Activated T-helper 2 cell treated with anti-CD3 and anti-CD28 coated beads, Interferon-gamma antibody, Interleukin-2, Interleukin-4, amounts not matched to agents 10 μg/mL and 5 μg/mL and 100 μg/mL, durations not matched to agents 14 hours and 24 hours and 36 hours (primary cell): ENCODE measurements at regions of chr2 and their contacts with region 1.

Region 1: GRCh38 chr2:136117909-136118818 is at the start of gene CXCR4:
- DNase-seq: peak; percentile 81
- H3K4me3 Mint-ChIP-seq: peak within 1 kb of the TSS; percentile 97
- H3K27ac Mint-ChIP-seq: peak within 1 kb of the TSS; percentile 96
- H3K4me1 Mint-ChIP-seq: peaks cover 49% of the 10 kb centered on the region
- H3K27me3 Mint-ChIP-seq: peaks cover 21% of the 10 kb centered on the region
- total RNA-seq, gene CXCR4: 140 and 144 TPM in 2 replicates

Region 2: DNA sequence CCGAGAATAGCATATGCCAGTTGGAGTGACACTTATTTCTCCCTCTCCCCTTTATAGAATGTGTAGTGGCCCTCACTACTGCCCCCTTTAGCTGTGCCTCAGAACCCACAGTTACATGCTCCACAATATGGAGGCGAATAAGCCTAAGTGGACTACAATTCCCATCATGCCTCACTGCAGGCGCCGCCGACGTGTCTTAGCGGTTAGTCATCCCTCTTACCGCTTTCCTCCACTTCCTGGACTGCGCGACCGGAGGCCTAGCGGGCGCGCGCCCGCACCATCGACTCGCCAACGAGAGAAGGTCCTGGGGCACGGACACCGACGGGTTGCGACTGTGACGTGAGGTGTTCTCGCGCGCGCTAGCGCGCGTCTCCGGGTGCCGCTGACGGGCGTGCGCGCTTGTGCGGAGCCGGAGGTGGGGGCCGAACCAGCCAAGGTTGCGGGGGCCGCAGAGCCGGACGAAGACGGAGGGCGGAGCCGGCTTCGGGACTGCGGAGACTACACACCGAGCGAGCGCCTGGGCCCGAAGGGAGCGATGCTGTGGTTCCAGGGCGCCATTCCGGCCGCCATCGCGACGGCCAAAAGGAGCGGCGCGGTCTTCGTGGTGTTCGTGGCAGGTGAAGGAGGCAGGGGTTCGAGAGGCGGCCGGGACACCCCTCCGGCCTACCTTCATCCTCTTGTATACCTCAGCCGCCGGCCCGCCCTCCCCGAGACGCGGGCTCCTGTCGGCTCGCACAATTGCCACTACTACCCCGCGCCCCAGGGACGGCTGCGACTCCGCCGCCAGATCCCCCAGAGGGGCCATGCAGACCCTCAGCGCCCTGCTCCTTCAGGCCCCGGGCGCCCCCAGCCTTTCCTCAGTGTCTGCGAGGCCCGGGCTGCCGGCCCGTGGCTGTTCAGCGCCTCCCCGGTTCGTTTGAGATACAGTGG is 376.5 kb before region 1 on chr2 and contains the start of gene UBXN4:
- intact Hi-C with region 1: loop called (anchors 5 kb)
- DNase-seq: peak; percentile 90
- H3K4me3 Mint-ChIP-seq: peak within 1 kb of the TSS; percentile 98
- H3K27ac Mint-ChIP-seq: peak within 1 kb of the TSS; percentile 100
- H3K4me1 Mint-ChIP-seq: peaks cover 34% of the 10 kb centered on the region
- H3K27me3 Mint-ChIP-seq: no peaks in the 10 kb centered on the region
- total RNA-seq, gene UBXN4: 118 and 138 TPM in 2 replicates

Region 3: GRCh38 chr2:135797497-135798274 is 320.5 kb before region 1 on chr2:
- intact Hi-C with region 1: no loop called
- DNase-seq: peak; percentile 67
- H3K4me3 Mint-ChIP-seq: no peak overlapping the region
- H3K27ac Mint-ChIP-seq: no peak overlapping the region
- H3K4me1 Mint-ChIP-seq: peaks cover 21% of the 10 kb centered on the region
- H3K27me3 Mint-ChIP-seq: no peaks in the 10 kb centered on the region

Region 4: GRCh38 chr2:135960656-135961551 is 157.3 kb before region 1 on chr2:
- intact Hi-C with region 1: loop called (anchors 2 kb)
- DNase-seq: peak; percentile 32
- H3K4me3 Mint-ChIP-seq: peak overlapping the region; percentile 66
- H3K27ac Mint-ChIP-seq: peak overlapping the region; percentile 96
- H3K4me1 Mint-ChIP-seq: peaks cover 57% of the 10 kb centered on the region
- H3K27me3 Mint-ChIP-seq: no peaks in the 10 kb centered on the region

Region 5: DNA sequence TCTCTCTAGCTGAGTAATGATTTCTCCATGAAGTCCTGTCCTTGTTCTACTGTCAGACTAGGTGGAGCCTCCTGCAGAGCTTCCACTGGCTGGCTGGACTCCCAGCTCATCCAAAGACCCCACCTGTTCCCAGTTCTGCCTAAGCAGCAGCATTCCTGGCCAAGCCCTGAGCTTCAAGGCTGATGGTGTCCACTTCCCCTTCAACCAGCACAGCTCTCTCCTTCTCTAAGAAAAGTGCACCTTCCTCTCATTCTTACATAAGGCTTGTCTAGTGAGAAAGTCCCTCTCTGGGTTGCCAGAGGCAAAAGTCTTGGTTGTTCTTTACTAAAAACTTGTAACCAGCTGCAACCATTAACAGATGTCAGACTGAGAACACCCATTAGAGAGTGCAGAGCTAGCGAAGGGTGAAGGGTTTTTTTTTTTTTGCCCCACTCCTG is 59.1 kb before region 1 on chr2:
- intact Hi-C with region 1: loop called (anchors 1 kb)
- DNase-seq: no peak
- H3K4me3 Mint-ChIP-seq: no peak overlapping the region
- H3K27ac Mint-ChIP-seq: peak overlapping the region; percentile 5
- H3K4me1 Mint-ChIP-seq: peaks cover 56% of the 10 kb centered on the region
- H3K27me3 Mint-ChIP-seq: no peaks in the 10 kb centered on the region

Region 6: DNA sequence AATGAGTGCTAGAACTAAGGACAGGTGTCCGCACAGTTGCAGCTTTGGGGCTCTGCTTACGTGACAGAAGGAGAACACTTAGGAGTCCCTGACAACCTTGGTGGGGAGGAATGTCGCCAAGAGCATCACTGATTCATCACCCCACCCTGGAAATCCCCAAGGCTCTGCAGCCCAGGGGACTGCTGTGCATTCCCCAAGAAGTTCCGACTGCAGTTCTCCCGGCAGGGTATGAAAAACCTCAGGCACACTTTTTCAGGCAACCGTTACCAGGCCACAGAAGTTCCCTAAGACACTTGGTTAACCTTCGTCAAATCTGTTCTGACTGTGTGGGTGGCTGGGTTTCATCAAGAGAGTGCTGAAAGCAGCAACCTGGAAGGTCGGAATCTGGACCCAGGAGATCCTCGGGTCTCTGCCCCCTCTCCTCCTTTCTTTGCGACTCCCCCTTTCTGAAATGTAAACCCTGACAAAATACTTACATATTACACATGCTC is 191.9 kb after region 1 on chr2:
- intact Hi-C with region 1: loop called (anchors 2 kb)
- DNase-seq: no peak
- H3K4me3 Mint-ChIP-seq: peak overlapping the region; percentile 41
- H3K27ac Mint-ChIP-seq: peak overlapping the region; percentile 94
- H3K4me1 Mint-ChIP-seq: peaks cover 47% of the 10 kb centered on the region
- H3K27me3 Mint-ChIP-seq: no peaks in the 10 kb centered on the region

Region 7: GRCh38 chr2:136823291-136823690 is 705.1 kb after region 1 on chr2:
- intact Hi-C with region 1: no loop called
- DNase-seq: no peak
- H3K4me3 Mint-ChIP-seq: no peak overlapping the region
- H3K27ac Mint-ChIP-seq: no peak overlapping the region
- H3K4me1 Mint-ChIP-seq: no peaks in the 10 kb centered on the region
- H3K27me3 Mint-ChIP-seq: no peaks in the 10 kb centered on the region